MCF 10A (cell line): ENCODE measurements at regions of chr11 and their contacts with region 1.

Region 1: GRCh38 chr11:36564376-36565030 is 3.3 kb upstream of the RAG1 start:
- DNase-seq: peak; percentile 71
- H3K4me3 Mint-ChIP-seq: peak overlapping the region; percentile 71
- H3K27ac Mint-ChIP-seq: peak overlapping the region; percentile 8
- H3K4me1 Mint-ChIP-seq: no peaks in the 10 kb centered on the region
- H3K27me3 Mint-ChIP-seq: peaks cover 44% of the 10 kb centered on the region
- CTCF ChIP-seq: peak; percentile 61

Region 2: GRCh38 chr11:36577859-36578258 is 13.4 kb after region 1 on chr11:
- CTCF ChIA-PET with region 1: interaction called, 52 read pairs
- POLR2A ChIA-PET with region 1: no interaction called
- intact Hi-C with region 1: no loop called
- DNase-seq: no peak
- H3K4me3 Mint-ChIP-seq: no peak overlapping the region
- H3K27ac Mint-ChIP-seq: no peak overlapping the region
- H3K4me1 Mint-ChIP-seq: no peaks in the 10 kb centered on the region
- H3K27me3 Mint-ChIP-seq: peaks cover 12% of the 10 kb centered on the region
- CTCF ChIP-seq: no peak

Region 3: DNA sequence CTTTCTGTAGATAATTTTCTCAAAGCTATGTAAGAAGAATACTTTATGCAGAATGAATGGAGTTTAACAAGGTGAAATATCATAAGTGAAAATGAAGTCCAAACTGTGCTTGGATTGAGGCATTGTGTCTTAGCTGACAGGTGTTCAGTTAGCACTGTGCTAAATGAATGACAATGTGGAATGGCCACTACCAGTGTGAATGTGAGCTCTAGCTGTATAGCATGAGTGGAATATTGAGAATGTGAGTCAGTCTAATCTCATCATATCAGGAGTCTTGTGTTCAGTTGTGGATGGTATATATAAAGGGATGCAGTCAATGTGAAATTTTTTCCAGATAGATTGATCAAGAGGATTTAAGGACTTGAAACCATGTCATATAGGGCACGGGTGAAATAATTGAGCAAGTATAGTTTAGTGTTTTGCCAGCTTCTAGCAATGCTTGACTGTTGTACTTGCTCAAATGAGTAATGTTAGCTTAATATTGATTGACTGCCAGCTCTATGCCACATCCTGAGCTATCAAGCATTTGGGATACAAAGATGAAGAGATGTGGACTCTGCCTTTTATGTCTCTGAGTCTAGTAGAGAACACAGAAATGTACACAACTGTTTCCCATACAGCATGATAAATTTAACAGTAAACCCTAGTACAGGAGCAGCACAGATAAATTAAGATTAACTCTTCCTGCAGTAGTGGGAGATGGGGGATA is 44.1 kb after region 1 on chr11:
- CTCF ChIA-PET with region 1: interaction called, 13 read pairs
- POLR2A ChIA-PET with region 1: no interaction called
- intact Hi-C with region 1: no loop called
- DNase-seq: no peak
- H3K4me3 Mint-ChIP-seq: no peak overlapping the region
- H3K27ac Mint-ChIP-seq: no peak overlapping the region
- H3K4me1 Mint-ChIP-seq: no peaks in the 10 kb centered on the region
- H3K27me3 Mint-ChIP-seq: no peaks in the 10 kb centered on the region
- CTCF ChIP-seq: no peak

Region 4: GRCh38 chr11:36672813-36673450 is 108.4 kb after region 1 on chr11:
- CTCF ChIA-PET with region 1: interaction called, 64 read pairs
- POLR2A ChIA-PET with region 1: interaction called, 3 read pairs
- intact Hi-C with region 1: loop called (anchors 1 kb)
- DNase-seq: peak; percentile 62
- H3K4me3 Mint-ChIP-seq: no peak overlapping the region
- H3K27ac Mint-ChIP-seq: no peak overlapping the region
- H3K4me1 Mint-ChIP-seq: no peaks in the 10 kb centered on the region
- H3K27me3 Mint-ChIP-seq: no peaks in the 10 kb centered on the region
- CTCF ChIP-seq: peak; percentile 57

Region 5: GRCh38 chr11:36702330-36703055 is 138.0 kb after region 1 on chr11:
- CTCF ChIA-PET with region 1: interaction called, 29 read pairs
- POLR2A ChIA-PET with region 1: no interaction called
- intact Hi-C with region 1: no loop called
- DNase-seq: peak; percentile 78
- H3K4me3 Mint-ChIP-seq: no peak overlapping the region
- H3K27ac Mint-ChIP-seq: no peak overlapping the region
- H3K4me1 Mint-ChIP-seq: peaks cover 11% of the 10 kb centered on the region
- H3K27me3 Mint-ChIP-seq: peaks cover 3% of the 10 kb centered on the region
- CTCF ChIP-seq: peak; percentile 91